ENCODE measurements at regions of chr13 and their contacts with region 1.

Region 1: GRCh38 chr13:46184277-46184699 is 2.3 kb upstream of the LCP1 start:
- DNase-seq: peak in 8 of 9 donors; percentile 60 to 74 (median 69)
- ATAC-seq: peak; percentile 75
- H3K4me3 ChIP-seq: peak overlapping the region; percentile 83
- H3K4me3 Mint-ChIP-seq: peak overlapping the region; percentile 67 to 99 (median 85)
- H3K27ac ChIP-seq: peak overlapping the region; percentile 82
- H3K27ac Mint-ChIP-seq: peak overlapping the region; percentile 86 to 99 (median 96)
- H3K4me1 ChIP-seq: peaks cover 27 to 35% of the 10 kb centered on the region in 2 donors
- H3K4me1 Mint-ChIP-seq: peaks cover 35 to 48% (median 38%) of the 10 kb centered on the region in 7 donors
- H3K27me3 ChIP-seq: no peaks in the 10 kb centered on the region
- H3K27me3 Mint-ChIP-seq: peaks cover 0 to 3% (median 0%) of the 10 kb centered on the region in 5 donors

Region 2: DNA sequence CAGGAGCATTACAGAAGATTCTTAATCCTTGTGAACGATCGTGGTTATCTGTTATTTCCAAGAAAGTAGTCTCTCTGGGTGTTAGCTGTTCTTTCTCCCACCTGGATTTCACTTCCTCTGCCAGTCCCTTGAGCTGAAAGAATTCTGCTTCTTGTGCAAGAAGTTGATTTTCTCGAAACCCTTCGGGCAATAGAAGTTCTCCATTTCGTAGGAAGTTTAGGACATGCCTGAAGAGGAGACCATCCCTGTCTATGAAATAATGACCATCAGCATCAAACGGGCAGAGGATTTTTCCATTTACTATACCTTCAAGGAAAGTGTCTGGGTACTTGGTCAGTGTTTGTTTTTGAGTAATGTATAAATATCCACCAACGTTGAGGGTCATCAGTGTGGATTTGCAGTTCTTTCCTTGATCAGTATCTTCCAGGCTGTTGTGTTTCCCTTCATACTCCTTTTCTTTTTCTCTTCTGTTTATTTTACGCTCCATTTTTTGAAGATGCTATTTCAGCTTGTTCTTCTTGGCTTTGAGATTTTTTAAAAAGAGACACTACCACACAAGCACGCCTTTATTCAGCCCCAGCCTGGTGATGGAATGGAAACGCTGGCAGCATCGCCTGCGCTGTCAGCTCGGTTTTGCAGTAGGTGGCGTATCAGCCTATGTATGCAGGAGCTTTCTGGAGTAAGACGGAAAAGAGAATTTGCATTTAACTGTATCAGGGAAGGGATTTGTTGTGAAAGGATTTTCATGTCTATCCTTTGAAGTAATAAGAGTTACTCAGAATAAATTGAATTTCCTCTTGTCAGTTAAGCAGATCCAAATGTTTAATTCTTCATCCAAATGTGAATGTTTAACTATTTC is 990.0 kb before region 1 on chr13:
- CTCF ChIA-PET with region 1: no interaction called
- POLR2A ChIA-PET with region 1: no interaction called
- intact Hi-C with region 1: no loop called
- DNase-seq: no peak
- ATAC-seq: no peak
- H3K4me3 ChIP-seq: no peak overlapping the region
- H3K4me3 Mint-ChIP-seq: no peak overlapping the region
- H3K27ac ChIP-seq: no peak overlapping the region
- H3K27ac Mint-ChIP-seq: no peak overlapping the region
- H3K4me1 ChIP-seq: no peaks in the 10 kb centered on the region
- H3K4me1 Mint-ChIP-seq: peaks cover 0 to 12% (median 6%) of the 10 kb centered on the region in 7 donors
- H3K27me3 ChIP-seq: no peaks in the 10 kb centered on the region
- H3K27me3 Mint-ChIP-seq: no peaks in the 10 kb centered on the region

Region 3: DNA sequence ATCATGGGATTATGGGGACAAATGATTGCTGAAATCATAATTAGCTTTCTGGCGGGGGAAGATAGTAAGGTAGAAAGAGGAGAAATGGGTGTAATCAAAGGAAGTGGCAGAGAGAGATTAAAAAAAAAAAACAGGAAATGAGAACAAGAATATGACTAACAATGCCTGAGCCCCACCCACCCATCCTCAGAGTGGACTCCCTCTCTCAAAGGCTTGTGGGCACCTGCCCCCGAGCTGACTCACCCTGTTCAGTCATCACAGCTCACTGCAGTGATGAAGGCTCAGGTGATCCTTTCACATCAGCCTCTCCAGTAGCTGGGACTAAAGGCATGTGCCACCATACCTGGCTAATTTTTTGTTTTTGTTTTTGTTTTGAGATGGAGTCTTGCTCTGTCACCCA is 816.9 kb before region 1 on chr13:
- CTCF ChIA-PET with region 1: no interaction called
- POLR2A ChIA-PET with region 1: no interaction called
- intact Hi-C with region 1: loop called in 1 of 2 experiments (anchors 1 kb)
- DNase-seq: peak; percentile 38 to 93 (median 82)
- ATAC-seq: peak; percentile 99
- H3K4me3 ChIP-seq: no peak overlapping the region
- H3K4me3 Mint-ChIP-seq: peak overlapping the region; percentile 48 to 80 (median 67)
- H3K27ac ChIP-seq: peak overlapping the region; percentile 31
- H3K27ac Mint-ChIP-seq: peak overlapping the region; percentile 81 to 96 (median 90)
- H3K4me1 ChIP-seq: peaks cover 25 to 27% of the 10 kb centered on the region in 2 donors
- H3K4me1 Mint-ChIP-seq: peaks cover 48 to 62% (median 60%) of the 10 kb centered on the region in 7 donors
- H3K27me3 ChIP-seq: no peaks in the 10 kb centered on the region
- H3K27me3 Mint-ChIP-seq: no peaks in the 10 kb centered on the region

Region 4: GRCh38 chr13:46146899-46147298 is 37.4 kb before region 1 on chr13:
- CTCF ChIA-PET with region 1: no interaction called
- POLR2A ChIA-PET with region 1: no interaction called
- intact Hi-C with region 1: loop called in 1 of 2 experiments (anchors 1 kb)
- DNase-seq: no peak
- ATAC-seq: no peak
- H3K4me3 ChIP-seq: no peak overlapping the region
- H3K4me3 Mint-ChIP-seq: no peak overlapping the region
- H3K27ac ChIP-seq: no peak overlapping the region
- H3K27ac Mint-ChIP-seq: peak overlapping the region; percentile 2 to 77 (median 51)
- H3K4me1 ChIP-seq: no peaks in the 10 kb centered on the region
- H3K4me1 Mint-ChIP-seq: peaks cover 12 to 47% (median 27%) of the 10 kb centered on the region in 7 donors
- H3K27me3 ChIP-seq: no peaks in the 10 kb centered on the region
- H3K27me3 Mint-ChIP-seq: no peaks in the 10 kb centered on the region

Region 5: GRCh38 chr13:46202188-46202795 is 18.0 kb after region 1 on chr13:
- CTCF ChIA-PET with region 1: interaction called, 3 read pairs
- POLR2A ChIA-PET with region 1: interaction called, 11 read pairs
- intact Hi-C with region 1: loop called (anchors 1 kb)
- DNase-seq: peak in 5 of 9 donors; percentile 33 to 51 (median 49)
- ATAC-seq: peak; percentile 76
- H3K4me3 ChIP-seq: no peak overlapping the region
- H3K4me3 Mint-ChIP-seq: peak overlapping the region in 9 of 10 donors; percentile 8 to 78 (median 53)
- H3K27ac ChIP-seq: no peak overlapping the region
- H3K27ac Mint-ChIP-seq: peak overlapping the region; percentile 49 to 89 (median 76)
- H3K4me1 ChIP-seq: peaks cover 13 to 22% of the 10 kb centered on the region in 2 donors
- H3K4me1 Mint-ChIP-seq: peaks cover 9 to 58% (median 48%) of the 10 kb centered on the region in 7 donors
- H3K27me3 ChIP-seq: no peaks in the 10 kb centered on the region
- H3K27me3 Mint-ChIP-seq: no peaks in the 10 kb centered on the region

Region 6: DNA sequence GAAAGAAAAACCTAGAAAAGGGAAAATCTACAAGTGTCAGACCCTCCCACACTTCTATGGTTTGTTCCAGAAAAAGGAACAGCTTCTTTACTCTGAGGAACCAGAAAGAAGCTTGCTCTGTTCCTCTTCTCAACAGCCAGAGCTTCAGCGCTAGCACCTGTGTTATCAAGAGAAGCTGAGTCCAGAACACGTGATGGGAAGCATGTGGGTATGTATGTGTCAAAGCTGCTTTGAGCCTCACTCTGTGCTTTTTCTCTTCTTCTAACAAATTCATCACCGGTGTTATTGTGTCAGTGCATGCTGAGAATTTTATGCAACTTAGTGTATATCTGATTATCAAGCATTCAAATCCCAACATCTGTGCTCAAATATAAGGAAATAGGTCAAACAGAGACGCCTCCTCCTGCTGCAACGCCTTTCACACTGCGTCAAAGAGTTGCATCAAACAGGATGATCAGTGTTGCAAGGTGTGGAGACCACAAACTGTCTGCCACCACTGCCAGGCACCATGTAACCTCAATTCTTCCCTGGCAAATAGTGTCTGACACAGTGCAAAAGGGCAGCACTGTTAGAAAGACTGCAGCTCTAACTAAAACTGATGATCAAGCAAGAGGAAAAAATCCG is 111.3 kb after region 1 on chr13:
- CTCF ChIA-PET with region 1: no interaction called
- POLR2A ChIA-PET with region 1: interaction called, 11 read pairs
- intact Hi-C with region 1: loop called (anchors 1 kb)
- DNase-seq: peak in 8 of 9 donors; percentile 28 to 90 (median 88)
- ATAC-seq: peak; percentile 94
- H3K4me3 ChIP-seq: peak overlapping the region; percentile 12
- H3K4me3 Mint-ChIP-seq: peak overlapping the region; percentile 4 to 87 (median 76)
- H3K27ac ChIP-seq: peak overlapping the region; percentile 77
- H3K27ac Mint-ChIP-seq: peak overlapping the region; percentile 92 to 99 (median 96)
- H3K4me1 ChIP-seq: peaks cover 35 to 52% of the 10 kb centered on the region in 2 donors
- H3K4me1 Mint-ChIP-seq: peaks cover 36 to 73% (median 68%) of the 10 kb centered on the region in 7 donors
- H3K27me3 ChIP-seq: no peaks in the 10 kb centered on the region
- H3K27me3 Mint-ChIP-seq: no peaks in the 10 kb centered on the region

Region 7: DNA sequence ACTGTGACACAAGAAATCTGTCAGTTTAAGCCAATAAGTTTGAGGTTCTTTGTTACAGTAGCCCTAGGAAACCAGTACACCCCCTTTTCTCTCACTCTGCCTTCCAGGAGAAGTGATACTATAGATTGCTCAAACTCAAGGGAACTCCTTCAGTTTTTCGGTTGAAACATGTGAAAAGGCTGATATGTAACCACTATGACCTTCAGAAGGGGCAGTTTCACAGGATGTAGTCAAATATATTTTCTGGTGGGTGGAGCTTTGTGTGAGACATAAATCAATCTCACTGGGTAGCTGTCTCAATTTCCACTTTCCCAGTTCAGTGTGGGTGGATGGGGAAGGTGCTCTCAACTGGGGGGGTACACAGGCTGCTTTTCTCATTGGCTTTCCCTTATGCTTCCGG is 670.9 kb after region 1 on chr13:
- CTCF ChIA-PET with region 1: no interaction called
- POLR2A ChIA-PET with region 1: no interaction called
- intact Hi-C with region 1: no loop called
- DNase-seq: no peak
- ATAC-seq: no peak
- H3K4me3 ChIP-seq: no peak overlapping the region
- H3K4me3 Mint-ChIP-seq: no peak overlapping the region
- H3K27ac ChIP-seq: no peak overlapping the region
- H3K27ac Mint-ChIP-seq: no peak overlapping the region
- H3K4me1 ChIP-seq: no peaks in the 10 kb centered on the region
- H3K4me1 Mint-ChIP-seq: peaks cover 0 to 2% (median 0%) of the 10 kb centered on the region in 7 donors
- H3K27me3 ChIP-seq: no peaks in the 10 kb centered on the region
- H3K27me3 Mint-ChIP-seq: peaks cover 10 to 24% (median 15%) of the 10 kb centered on the region in 5 donors